ENCODE measurements at regions of chr18 and their contacts with region 1.

Region 1: DNA sequence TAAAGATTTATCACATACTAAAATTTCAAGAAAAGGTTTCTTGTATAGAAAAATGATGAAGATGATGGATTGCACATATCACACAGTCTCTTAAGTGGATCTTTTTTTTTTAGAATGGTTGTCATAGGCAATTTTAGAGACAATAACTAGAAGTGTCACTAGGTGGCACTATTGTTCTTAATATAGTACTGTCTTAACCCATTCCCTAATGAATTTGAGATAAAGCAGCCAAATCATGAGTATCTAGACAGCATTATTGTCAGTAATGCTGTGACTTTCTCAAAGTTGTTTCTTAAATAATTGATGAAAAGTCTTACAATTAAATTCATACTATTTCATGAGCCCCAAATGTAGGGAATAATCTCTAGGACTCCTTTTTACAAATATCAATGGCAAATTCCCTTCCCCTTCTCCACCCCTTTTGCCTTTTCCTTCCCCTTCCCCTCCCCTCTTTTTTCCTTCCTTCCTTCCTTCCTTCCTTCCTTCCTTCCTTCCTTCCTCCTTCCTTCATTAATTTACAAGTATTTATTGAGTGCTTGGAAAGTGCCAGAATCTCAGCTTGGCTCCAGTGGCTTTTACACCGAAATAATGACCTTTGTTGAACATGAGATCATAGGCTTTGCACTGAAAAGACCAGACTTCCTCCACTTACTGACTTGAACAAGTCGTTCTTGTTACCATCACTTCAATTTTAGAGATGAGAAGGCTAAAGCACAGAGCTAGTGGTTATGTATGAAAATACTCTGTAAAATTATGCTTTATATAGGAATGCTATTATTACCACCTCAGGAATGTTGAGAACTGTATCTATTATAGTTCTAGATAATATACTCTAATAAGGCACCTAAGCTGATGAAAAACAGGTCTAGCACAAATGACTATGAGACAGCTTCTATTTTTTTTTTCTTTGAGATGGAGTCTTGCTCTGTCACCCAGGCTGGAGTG is 19.8 kb downstream of the MYL12B start:
- DNase-seq: peak; percentile 91
- H3K4me3 ChIP-seq: no peak overlapping the region
- H3K27ac ChIP-seq: peak overlapping the region; percentile 99
- H3K4me1 ChIP-seq: peaks cover 54% of the 10 kb centered on the region
- CTCF ChIP-seq: peak; percentile 91

Region 2: GRCh38 chr18:3297025-3297984 is 15.6 kb after region 1 on chr18:
- CTCF ChIA-PET with region 1: interaction called, 10 read pairs
- POLR2A ChIA-PET with region 1: interaction called, 5 read pairs
- intact Hi-C with region 1: loop called (anchors 1 kb)
- DNase-seq: peak; percentile 97
- H3K4me3 ChIP-seq: peak overlapping the region; percentile 85
- H3K27ac ChIP-seq: peak overlapping the region; percentile 57
- H3K4me1 ChIP-seq: peaks cover 10% of the 10 kb centered on the region
- CTCF ChIP-seq: peak; percentile 98

Region 3: DNA sequence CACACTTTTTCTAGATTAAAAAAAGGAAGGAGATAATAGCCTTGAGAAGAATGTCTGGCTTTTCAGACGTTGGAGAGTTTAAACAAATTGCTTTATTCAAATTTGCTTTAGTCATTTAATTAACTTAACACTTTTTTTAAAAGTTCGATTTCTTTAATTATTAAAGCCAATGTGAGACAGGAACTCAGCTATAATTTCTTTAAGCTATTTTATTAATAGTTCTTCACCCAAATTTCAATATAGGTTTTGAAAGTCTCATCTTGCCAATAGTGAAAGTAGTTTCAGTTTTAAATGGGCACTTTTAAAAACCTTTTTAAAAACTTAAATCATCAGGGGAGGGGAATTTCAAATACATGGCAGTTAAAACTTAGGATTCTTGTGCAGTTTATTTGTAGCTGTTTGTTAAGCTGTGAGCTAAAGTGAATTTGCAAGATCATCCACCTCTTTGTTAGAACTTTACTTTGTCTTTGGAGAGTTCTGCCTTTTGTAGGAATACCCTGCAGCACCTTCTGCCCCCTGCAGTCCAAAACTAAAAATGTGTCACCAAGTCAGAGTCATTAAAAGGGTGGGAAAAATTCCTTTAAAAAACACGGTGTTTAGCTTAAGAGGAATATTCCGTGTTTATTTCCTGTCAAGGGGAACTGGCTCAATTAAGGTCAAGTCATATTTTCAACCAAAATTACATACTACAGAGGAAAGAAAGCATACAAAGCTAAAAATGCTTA is 172.8 kb after region 1 on chr18:
- CTCF ChIA-PET with region 1: interaction called, 5 read pairs
- POLR2A ChIA-PET with region 1: interaction called, 3 read pairs
- intact Hi-C with region 1: loop called (anchors 1 kb)
- DNase-seq: peak; percentile 61
- H3K4me3 ChIP-seq: peak overlapping the region; percentile 88
- H3K27ac ChIP-seq: peak overlapping the region; percentile 72
- H3K4me1 ChIP-seq: peaks cover 48% of the 10 kb centered on the region
- CTCF ChIP-seq: peak; percentile 98

Region 4: DNA sequence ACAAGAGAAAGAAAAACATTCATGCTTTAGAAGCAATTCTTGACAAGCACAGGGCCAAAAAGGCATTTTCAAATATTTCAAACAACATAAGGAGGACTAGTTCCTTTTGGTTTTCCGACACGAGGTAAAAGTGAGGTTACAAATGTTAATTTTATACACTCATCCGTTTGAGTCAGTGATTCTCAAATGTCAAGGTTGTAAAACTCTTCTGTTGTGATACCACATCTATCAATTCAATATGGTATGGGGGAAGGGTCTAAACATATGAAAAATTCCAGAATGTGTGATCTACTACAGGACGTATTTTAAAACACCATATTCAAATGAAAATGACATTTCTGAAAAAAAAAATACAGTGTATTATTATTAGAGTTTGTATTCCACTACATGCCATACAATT is 220.9 kb after region 1 on chr18:
- CTCF ChIA-PET with region 1: no interaction called
- POLR2A ChIA-PET with region 1: no interaction called
- intact Hi-C with region 1: no loop called
- DNase-seq: no peak
- H3K4me3 ChIP-seq: no peak overlapping the region
- H3K27ac ChIP-seq: no peak overlapping the region
- H3K4me1 ChIP-seq: peaks cover 13% of the 10 kb centered on the region
- CTCF ChIP-seq: no peak

Region 5: DNA sequence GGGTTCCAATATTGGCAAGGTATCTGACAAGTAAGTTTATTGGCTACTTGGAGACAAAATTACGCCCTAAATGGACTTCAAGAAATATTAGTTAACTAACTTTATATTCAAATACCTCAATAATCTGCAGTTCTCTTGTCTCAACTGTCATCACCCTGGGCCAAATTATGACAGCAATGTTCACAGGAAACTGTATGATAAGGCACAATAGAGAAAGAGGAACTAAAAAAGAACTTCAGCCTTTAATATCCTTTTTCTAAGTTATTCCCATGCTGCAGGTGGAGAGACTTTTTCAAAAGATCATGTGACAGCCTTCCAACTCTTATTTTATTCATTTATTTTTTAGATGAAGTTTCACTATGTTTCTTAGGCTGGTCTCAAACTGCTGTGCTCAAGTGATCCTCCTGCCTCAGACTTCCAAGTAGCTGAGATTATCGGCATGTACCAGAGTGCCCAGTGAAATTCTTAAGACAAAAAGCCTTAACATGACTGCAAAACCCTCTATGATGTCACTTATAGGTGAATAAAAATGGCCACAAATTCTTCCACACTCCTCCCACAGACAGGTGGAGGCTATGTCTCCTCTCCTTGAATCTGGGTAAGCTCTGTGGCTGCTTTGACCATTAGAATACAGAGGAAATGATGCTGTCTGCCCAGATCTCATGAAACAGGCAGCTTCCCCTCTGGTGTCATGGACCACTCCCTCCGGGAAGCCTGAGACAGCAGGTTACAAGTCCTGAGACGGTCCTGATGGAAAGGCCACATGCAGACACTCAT is 379.2 kb after region 1 on chr18:
- CTCF ChIA-PET with region 1: interaction called, 10 read pairs
- POLR2A ChIA-PET with region 1: interaction called, 22 read pairs
- intact Hi-C with region 1: loop called (anchors 1 kb)
- DNase-seq: peak; percentile 73
- H3K4me3 ChIP-seq: peak overlapping the region; percentile 53
- H3K27ac ChIP-seq: peak overlapping the region; percentile 97
- H3K4me1 ChIP-seq: peaks cover 68% of the 10 kb centered on the region
- CTCF ChIP-seq: no peak

Region 6: DNA sequence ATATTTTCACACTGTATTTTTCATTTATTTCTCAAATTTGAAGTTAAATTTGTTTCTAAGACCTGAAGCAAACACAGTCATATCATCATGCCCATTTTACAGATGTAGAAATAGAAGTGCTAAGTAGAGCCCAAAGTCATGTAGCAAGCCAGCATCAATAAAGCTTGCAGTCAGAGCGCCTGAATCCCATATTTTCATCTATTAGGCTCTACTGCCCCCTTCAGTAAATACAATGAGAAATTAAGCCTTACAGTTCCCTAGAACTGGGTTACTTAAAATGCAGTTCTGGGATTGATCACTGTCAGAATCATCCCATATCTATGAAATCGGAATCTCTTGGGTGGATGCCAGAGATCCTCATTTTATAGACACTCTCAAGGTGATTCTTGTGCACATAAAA is 588.1 kb after region 1 on chr18:
- CTCF ChIA-PET with region 1: no interaction called
- POLR2A ChIA-PET with region 1: no interaction called
- intact Hi-C with region 1: loop called (anchors 5 kb)
- DNase-seq: peak; percentile 56
- H3K4me3 ChIP-seq: no peak overlapping the region
- H3K27ac ChIP-seq: no peak overlapping the region
- H3K4me1 ChIP-seq: peaks cover 7% of the 10 kb centered on the region
- CTCF ChIP-seq: peak; percentile 76

Measured in OCI-LY7 (cell line).